ENCODE measurements at regions of chr1 and their contacts with region 1.

Region 1: DNA sequence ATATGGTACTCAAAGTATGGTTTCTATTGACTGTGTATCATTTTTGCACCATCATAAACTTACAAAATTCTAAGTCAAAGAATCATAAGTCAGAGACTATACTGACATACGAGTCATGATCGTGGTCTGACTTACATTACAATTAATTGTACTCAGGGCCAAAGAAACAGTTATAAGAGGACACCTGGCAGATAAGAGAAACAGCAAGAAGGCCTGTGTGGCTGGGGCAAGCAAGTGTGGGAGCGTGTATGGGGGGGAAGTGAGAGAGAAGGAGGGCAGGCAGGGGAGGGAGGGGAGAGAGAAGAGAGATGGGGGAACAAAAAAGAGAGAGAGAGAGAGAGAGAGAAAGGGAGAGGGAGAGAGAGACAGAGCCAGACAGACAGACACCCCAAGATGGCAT is 70.9 kb downstream of the RERE start:
- DNase-seq: no peak
- H3K4me3 ChIP-seq: no peak overlapping the region
- H3K4me3 Mint-ChIP-seq: no peak overlapping the region
- H3K27ac Mint-ChIP-seq: peak overlapping the region; percentile 88
- H3K4me1 ChIP-seq: peaks cover 41% of the 10 kb centered on the region
- H3K4me1 Mint-ChIP-seq: peaks cover 30% of the 10 kb centered on the region
- H3K27me3 ChIP-seq: no peaks in the 10 kb centered on the region
- H3K27me3 Mint-ChIP-seq: no peaks in the 10 kb centered on the region
- CTCF ChIP-seq: no peak

Region 2: DNA sequence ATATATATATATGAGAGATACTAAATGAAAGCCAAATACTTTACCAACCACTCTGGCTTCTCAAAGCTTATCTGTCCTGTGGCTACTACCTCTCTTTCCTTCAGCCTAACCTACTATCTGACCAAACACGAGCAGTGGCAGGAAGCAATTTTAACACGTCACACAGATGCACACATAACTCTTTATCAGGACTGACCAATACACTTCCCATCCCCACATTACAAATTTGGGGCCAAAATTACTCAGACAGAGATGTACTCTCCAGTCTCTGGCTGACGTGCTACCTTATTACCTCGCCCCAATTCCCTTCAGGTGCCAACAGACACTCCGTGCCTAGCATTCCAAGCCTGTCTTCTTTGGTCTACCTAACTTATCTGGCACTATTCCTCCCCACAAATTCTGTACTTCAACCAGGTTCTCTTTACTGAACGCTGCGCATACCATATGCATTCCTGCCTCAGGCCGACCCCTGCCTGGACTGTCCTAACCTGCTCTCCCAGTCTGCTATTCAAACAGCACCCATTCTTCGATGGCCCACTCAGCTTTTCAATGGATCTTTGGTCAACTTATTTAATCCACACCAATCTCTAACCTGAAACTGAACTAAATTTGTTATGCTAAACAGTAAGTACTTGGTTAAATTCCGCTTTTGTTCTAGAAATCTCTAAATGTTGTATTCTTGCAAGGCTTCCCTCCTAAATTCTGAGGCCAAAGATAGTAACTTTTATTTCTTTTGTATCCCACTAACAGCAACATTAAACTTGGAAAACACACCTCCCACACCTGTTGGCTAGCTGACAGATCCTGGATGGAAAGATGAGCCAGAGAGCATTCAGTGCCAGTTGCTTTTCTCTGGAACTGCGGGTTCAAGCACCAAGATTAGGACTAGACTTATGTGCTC is 43.0 kb after region 1 on chr1:
- CTCF ChIA-PET with region 1: no interaction called
- POLR2A ChIA-PET with region 1: no interaction called
- intact Hi-C with region 1: loop called (anchors 2 kb)
- DNase-seq: peak; percentile 87 to 91
- H3K4me3 ChIP-seq: peak overlapping the region; percentile 4; the same call in 1 of the 2 replicates
- H3K4me3 Mint-ChIP-seq: peak overlapping the region; percentile 72
- H3K27ac Mint-ChIP-seq: peak overlapping the region; percentile 93
- H3K4me1 ChIP-seq: peaks cover 30% of the 10 kb centered on the region
- H3K4me1 Mint-ChIP-seq: peaks cover 31% of the 10 kb centered on the region
- H3K27me3 ChIP-seq: no peaks in the 10 kb centered on the region
- H3K27me3 Mint-ChIP-seq: no peaks in the 10 kb centered on the region
- CTCF ChIP-seq: no peak

Measured in Caco-2 (cell line).